ENCODE measurements at regions of chr11 and their contacts with region 1.

Region 1: DNA sequence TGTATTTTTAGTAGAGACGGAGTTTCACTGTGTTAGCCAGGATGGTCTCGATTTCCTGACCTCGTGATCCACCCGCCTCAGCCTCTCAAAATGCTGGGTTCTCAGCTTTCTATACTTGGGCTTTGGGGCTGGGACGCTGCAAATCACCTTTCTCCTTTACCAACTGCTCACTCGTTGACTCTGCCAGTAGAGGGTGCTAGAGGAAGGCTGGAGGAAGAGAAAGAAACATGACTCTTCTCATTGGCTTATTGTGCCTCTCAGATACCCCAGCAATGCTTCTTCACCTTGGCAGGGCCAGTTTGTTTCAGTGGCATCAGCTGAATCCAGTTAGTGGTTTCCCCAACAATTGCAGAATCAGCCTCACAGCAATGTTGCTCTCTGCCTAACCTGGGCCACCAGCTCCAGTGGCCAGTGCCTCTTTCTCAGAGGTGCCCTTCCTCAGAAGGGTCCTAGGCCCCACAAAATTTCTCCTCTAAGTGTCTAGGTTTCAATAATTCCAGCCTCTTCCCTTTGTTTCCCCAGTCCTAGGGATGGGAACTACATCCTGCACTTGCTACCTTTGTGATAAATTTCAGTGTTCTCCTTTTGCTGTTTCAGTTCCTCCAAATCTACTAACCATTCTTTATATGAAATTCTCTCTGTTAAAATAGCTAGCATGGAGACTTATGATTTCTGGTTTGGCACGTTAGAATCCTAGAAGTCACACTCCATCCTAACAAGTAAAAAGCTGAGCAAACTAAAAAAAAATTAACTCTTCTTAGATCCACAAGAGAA is 71.5 kb upstream of the VSTM5 start:
- DNase-seq: no peak
- H3K4me3 ChIP-seq: no peak overlapping the region
- CTCF ChIP-seq: peak; percentile 82

Region 2: DNA sequence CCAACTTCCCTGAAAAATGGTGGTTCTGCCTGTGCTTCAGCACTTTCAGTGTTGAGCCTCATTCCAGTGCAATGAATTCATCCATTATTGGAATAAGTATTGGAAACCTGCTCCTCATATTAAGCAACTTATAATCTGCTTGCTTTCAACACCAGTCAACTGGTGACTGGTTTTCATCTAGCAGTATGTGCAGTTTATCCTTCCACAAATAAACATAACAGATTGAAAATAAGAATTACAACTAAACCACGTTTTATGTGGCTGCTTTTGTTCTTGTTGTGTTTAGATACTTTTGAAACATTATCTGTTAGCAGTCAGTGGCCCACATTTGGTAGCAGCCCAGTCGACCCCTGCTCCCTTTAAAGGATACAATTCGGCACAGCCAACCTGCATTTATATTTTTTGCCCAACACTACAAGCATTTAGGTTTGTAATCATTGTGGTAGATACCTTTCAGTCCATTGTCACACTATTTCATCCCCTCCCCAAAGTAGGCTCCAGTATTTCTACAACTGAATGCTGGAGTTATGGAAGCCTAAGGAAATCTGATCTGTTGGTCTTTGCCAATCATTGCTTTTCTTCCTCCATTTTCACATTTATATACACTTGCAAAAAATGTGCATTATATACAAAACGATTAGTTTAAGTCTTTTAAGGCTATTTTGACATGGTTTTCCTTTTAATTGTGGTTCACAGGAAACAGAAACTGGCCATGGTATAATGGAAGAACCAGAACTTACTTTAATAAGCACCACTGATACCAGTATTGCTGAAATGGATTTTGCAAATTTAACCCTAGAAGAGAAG is 193.7 kb before region 1 on chr11:
- CTCF ChIA-PET with region 1: no interaction called
- POLR2A ChIA-PET with region 1: no interaction called
- DNase-seq: no peak
- H3K4me3 ChIP-seq: no peak overlapping the region
- CTCF ChIP-seq: no peak

Region 3: DNA sequence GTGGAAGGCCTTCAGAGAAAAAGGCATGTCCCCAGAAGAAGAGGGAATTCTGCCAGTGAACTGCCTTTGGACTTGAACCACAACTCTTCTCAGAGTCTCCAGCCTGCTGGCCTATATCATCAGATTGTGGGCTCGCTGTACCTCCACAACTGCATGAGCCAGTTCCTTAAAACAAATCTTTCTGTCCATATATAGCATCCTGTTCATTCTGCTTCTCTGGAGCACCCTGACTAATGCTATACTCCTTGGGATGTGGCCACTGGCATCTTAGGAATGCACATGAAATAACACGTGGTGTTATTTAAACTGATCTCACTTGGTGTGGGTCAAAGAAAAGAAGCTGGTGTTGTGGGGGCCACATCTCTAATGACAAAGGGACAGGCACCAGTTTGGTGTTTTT is 13.2 kb before region 1 on chr11:
- CTCF ChIA-PET with region 1: interaction called, 34 read pairs
- POLR2A ChIA-PET with region 1: no interaction called
- DNase-seq: peak; percentile 82
- H3K4me3 ChIP-seq: no peak overlapping the region
- CTCF ChIP-seq: no peak

Region 4: GRCh38 chr11:93933230-93933629 is 11.3 kb after region 1 on chr11:
- CTCF ChIA-PET with region 1: interaction called, 32 read pairs
- POLR2A ChIA-PET with region 1: no interaction called
- DNase-seq: no peak
- H3K4me3 ChIP-seq: no peak overlapping the region
- CTCF ChIP-seq: no peak

Region 5: GRCh38 chr11:93939084-93939760 is 17.3 kb after region 1 on chr11:
- CTCF ChIA-PET with region 1: interaction called, 28 read pairs
- POLR2A ChIA-PET with region 1: no interaction called
- DNase-seq: no peak
- H3K4me3 ChIP-seq: no peak overlapping the region
- CTCF ChIP-seq: no peak

Region 6: DNA sequence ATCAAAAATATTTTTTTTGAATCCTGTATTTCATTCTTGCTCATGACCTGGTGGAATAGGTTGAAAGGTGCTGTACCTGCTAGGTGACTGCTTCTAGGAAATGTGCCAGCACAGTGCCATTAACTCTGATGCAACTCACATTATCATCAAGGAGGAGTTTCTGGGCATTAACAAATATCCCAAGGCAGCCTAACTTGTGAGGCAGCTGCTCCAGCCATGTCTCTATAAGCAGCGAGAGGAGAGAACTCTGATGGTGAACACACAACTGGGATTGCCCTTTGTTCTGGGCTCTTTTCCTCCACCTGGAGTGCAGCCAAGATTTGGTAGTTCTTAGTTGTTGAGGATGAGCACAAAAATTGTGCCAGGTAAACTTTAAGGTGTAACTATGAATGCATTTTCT is 124.9 kb after region 1 on chr11:
- CTCF ChIA-PET with region 1: no interaction called
- POLR2A ChIA-PET with region 1: no interaction called
- DNase-seq: no peak
- H3K4me3 ChIP-seq: no peak overlapping the region
- CTCF ChIP-seq: no peak

Region 7: GRCh38 chr11:94417386-94417987 is 495.6 kb after region 1 on chr11:
- CTCF ChIA-PET with region 1: interaction called, 28 read pairs
- POLR2A ChIA-PET with region 1: no interaction called
- DNase-seq: peak; percentile 14
- H3K4me3 ChIP-seq: no peak overlapping the region
- CTCF ChIP-seq: peak; percentile 51

Region 8: DNA sequence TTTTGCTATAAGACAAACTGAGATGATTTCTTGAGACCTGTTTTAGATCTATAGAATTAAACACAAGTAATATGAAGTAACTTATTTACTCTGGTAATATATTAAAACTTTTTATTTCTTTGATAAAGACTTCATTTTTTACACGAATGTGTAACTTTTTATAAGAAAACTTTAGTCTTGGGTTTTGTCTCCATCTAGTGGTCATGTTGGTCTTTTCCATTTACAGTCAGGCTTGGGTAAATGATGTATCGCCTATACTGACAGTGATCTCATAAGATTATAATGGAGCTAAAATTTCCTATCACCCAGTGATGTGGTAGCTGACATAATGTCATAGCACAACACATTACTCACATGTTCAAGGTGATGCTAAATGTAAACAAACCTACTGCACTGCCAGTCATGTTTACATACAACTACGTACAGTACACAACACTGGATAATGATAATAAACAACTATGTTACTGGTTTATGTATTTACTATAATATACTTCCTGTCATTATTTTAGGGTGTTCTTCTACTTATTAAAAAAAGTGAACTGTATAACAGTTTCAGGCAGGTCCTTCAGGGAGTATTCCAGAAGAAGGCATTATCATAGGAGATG is 582.9 kb after region 1 on chr11:
- CTCF ChIA-PET with region 1: interaction called, 21 read pairs
- POLR2A ChIA-PET with region 1: no interaction called
- DNase-seq: no peak
- H3K4me3 ChIP-seq: no peak overlapping the region
- CTCF ChIP-seq: peak; percentile 26